ENCODE measurements at regions of chr11 and their contacts with region 1.

Region 1: GRCh38 chr11:12888525-12889158 is 120.5 kb upstream of the RASSF10 start:
- DNase-seq: peak; percentile 88
- ATAC-seq: peak; percentile 47
- H3K4me3 Mint-ChIP-seq: no peak overlapping the region
- H3K27ac Mint-ChIP-seq: no peak overlapping the region
- H3K4me1 Mint-ChIP-seq: no peaks in the 10 kb centered on the region
- H3K27me3 Mint-ChIP-seq: peaks cover 4% of the 10 kb centered on the region
- CTCF ChIP-seq: peak; percentile 83

Region 2: GRCh38 chr11:12599408-12600143 is 289.1 kb before region 1 on chr11:
- CTCF ChIA-PET with region 1: interaction called, 35 read pairs
- POLR2A ChIA-PET with region 1: no interaction called
- intact Hi-C with region 1: loop called (anchors 5 kb)
- DNase-seq: peak; percentile 46
- ATAC-seq: no peak
- H3K4me3 Mint-ChIP-seq: no peak overlapping the region
- H3K27ac Mint-ChIP-seq: no peak overlapping the region
- H3K4me1 Mint-ChIP-seq: peaks cover 16% of the 10 kb centered on the region
- H3K27me3 Mint-ChIP-seq: peaks cover 27% of the 10 kb centered on the region
- CTCF ChIP-seq: peak; percentile 83

Region 3: DNA sequence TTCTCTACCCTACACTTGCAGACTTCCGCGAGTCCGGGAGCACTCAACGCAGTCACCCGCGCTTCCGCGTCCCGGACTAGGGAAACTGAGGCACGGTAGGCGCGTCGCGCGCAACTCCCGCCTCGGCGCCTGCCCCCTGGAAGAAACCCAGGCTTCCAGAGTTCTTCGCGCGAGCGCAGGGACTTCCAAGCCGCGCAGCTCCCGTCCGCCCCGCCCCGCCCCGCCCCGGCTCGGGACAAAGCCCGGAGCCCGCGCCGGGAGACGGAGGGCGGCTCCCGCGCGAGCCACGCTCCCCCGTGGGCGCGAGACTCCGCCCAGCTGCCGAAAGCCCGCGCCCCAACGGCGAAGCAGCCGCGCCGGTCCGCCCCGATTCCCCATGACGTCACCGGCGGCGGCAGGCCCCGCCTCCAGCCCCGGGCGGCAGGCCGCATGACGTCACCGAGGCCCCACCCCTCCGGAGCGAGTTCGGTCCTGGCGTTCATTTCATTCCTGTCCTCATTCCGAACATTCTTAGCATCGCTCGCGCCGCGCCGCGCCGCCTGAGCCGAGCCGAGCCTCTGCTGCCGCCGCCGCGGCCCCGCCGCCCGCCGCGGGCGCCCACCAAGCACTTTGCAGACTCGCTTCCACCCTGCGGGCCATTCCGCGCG is 214.6 kb before region 1 on chr11 and contains the start of gene TEAD1:
- CTCF ChIA-PET with region 1: interaction called, 3 read pairs
- POLR2A ChIA-PET with region 1: no interaction called
- intact Hi-C with region 1: loop called (anchors 10 kb)
- DNase-seq: peak; percentile 82
- ATAC-seq: peak; percentile 92
- H3K4me3 Mint-ChIP-seq: peak within 1 kb of the TSS; percentile 75
- H3K27ac Mint-ChIP-seq: no peak within 1 kb of the TSS
- H3K4me1 Mint-ChIP-seq: peaks cover 7% of the 10 kb centered on the region
- H3K27me3 Mint-ChIP-seq: peaks cover 65% of the 10 kb centered on the region
- CTCF ChIP-seq: no peak
- total RNA-seq, gene TEAD1: 0.25 to 0.83 TPM

Region 4: GRCh38 chr11:12900496-12900895 is 11.9 kb after region 1 on chr11:
- CTCF ChIA-PET with region 1: interaction called, 22 read pairs
- POLR2A ChIA-PET with region 1: no interaction called
- intact Hi-C with region 1: no loop called
- DNase-seq: no peak
- ATAC-seq: no peak
- H3K4me3 Mint-ChIP-seq: no peak overlapping the region
- H3K27ac Mint-ChIP-seq: no peak overlapping the region
- H3K4me1 Mint-ChIP-seq: no peaks in the 10 kb centered on the region
- H3K27me3 Mint-ChIP-seq: peaks cover 18% of the 10 kb centered on the region
- CTCF ChIP-seq: no peak